ENCODE measurements at regions of chr17 and their contacts with region 1.

Region 1: DNA sequence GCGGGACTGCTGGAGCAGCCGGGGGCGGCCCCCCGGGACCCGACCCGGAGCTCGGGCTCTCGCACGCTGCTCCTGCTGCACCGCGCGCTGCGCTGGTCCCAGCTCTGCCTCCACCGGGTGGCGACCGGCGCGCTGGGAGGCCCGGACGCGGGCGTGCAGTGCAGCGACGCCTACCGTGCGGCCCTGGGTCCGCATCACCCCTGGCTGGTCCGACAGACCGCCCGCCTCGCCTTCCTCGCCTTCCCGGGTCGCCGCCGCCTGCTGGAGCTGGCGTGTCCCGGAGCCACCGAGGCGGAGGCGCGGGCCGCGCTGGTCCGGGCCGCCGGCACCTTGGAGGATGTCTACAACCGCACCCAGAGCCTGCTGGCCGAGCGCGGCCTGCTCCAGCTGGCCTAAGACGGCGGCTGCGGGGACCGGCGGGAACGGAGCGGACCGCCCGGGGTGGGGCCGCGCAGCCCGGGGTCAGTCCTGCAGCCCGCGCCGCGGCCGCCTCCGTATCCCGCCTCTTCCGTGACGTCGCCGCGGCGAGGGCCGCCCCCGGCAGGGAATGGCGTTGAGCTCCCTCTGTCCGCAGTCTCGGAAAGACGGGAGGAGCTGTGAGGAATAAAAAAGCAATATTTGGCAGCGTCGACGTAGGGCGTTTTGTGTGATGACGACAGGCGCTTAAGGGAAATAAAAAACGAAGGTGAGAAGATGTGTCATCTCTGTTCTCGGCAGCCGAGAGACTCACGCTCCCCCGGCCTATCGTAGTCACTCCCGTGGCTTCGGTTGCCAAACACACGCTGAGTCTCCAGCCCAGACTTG is 1.3 kb downstream of the GLTPD2 start:
- DNase-seq: peak; percentile 88
- ATAC-seq: peak; percentile 93
- H3K4me3 Mint-ChIP-seq: peak overlapping the region; percentile 86
- H3K27ac Mint-ChIP-seq: peak overlapping the region; percentile 90
- H3K4me1 Mint-ChIP-seq: peaks cover 30% of the 10 kb centered on the region
- H3K27me3 Mint-ChIP-seq: peaks cover 46% of the 10 kb centered on the region

Region 2: GRCh38 chr17:4709794-4710692 is 80.1 kb before region 1 on chr17 and contains the start of gene ARRB2:
- CTCF ChIA-PET with region 1: interaction called, 39 read pairs
- DNase-seq: peak; percentile 99
- ATAC-seq: peak; percentile 85
- H3K4me3 Mint-ChIP-seq: peak within 1 kb of the TSS; percentile 95
- H3K27ac Mint-ChIP-seq: peak within 1 kb of the TSS; percentile 97
- H3K4me1 Mint-ChIP-seq: peaks cover 61% of the 10 kb centered on the region
- H3K27me3 Mint-ChIP-seq: no peaks in the 10 kb centered on the region
- total RNA-seq, gene ARRB2: 348 to 365 TPM

Region 3: DNA sequence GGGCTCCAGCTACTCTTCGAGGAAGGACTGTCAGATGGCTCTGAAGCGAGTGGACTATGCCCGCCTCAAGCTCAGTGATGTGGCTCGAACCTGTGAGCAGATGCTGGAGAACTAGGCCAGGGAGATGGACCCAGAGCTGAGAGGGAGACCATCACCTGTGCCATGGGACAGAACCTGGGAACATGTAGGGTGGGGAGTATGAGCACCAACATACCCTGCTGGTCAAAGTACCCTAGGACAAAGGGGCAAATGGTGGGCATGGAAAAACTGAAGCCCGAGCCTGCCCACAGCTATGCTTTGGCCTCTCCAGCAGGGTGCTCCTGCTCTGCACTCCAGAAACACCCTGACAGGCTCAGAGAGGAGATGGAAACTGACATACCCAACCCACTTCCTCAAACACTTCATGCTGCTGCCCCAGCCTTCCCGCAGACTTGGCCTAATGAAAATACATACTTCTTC is 57.0 kb before region 1 on chr17:
- CTCF ChIA-PET with region 1: interaction called, 19 read pairs
- DNase-seq: no peak
- ATAC-seq: no peak
- H3K4me3 Mint-ChIP-seq: peak overlapping the region; percentile 91
- H3K27ac Mint-ChIP-seq: no peak overlapping the region
- H3K4me1 Mint-ChIP-seq: peaks cover 47% of the 10 kb centered on the region
- H3K27me3 Mint-ChIP-seq: peaks cover 4% of the 10 kb centered on the region

Region 4: DNA sequence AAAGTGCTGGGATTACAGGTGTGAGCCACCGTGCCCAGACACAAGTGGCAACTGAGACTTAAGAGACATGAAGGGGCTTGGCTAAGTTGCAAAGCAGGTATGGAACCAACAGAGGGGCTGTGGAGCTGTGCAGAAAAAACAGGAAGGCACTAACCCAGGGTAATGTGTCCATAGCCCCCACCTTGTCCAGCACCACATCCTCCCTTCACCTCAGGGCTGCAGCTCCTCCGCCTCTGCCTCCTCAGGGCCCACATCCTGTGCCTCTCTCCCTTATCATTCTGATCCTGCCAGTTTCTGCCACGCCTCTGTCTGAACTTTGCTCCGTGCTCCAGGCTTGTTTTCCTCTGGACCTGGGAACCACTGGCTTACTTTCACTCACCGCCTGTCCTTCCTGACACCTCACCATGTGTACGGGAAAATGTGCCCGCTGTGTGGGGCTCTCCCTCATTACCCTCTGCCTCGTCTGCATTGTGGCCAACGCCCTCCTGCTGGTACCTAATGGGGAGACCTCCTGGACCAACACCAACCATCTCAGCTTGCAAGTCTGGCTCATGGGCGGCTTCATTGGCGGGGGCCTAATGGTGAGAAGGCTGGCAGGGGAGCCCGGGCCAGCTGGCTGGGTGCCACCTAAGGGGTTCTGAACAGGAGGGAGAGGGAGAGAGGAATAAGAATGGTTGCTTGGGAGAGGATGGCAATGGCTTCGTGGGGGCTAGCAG is 18.4 kb before region 1 on chr17 and contains the start of gene TM4SF5:
- CTCF ChIA-PET with region 1: interaction called, 33 read pairs
- DNase-seq: peak; percentile 83
- ATAC-seq: peak; percentile 92
- H3K4me3 Mint-ChIP-seq: peak within 1 kb of the TSS; percentile 3
- H3K27ac Mint-ChIP-seq: peak within 1 kb of the TSS; percentile 25
- H3K4me1 Mint-ChIP-seq: peaks cover 16% of the 10 kb centered on the region
- H3K27me3 Mint-ChIP-seq: peaks cover 20% of the 10 kb centered on the region
- total RNA-seq, gene TM4SF5: not detected

Region 5: DNA sequence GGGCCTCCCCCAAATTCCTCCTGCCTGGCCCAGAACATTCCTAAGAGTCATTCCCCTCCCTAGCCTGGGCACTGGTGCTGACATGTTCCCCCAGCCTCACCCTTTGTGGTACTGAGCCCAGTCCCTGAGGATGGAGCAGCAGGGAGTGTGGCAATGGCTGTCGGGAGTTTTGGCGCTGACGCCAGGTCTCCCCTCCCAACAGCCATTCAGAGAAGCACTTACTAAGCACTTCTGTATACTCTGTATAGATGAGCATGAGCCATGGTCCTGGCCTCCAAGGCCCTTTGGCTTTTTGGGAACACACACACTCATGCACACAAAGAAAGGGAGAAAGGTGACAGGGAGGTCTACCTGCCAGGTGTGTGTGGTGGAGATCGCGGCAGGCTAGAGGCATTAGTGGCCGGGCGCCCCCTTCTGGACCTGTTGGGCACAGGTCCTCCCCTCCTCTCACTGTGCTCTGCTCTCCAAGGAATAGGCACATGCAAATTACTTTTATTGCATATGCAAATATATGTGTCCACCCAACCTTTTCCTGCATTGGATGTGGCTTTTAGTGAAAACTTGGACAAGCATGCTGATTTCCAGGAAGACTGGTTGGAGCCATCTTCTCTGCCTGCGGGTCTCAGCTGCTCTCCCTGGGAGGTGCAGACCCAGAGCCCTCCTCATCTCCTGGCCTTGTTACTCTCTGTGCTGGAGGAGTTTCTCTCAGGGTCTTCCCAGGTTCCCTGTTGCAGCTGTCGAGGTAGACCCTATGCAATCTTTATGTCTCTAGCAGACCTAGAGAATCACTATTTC is 91.9 kb after region 1 on chr17:
- CTCF ChIA-PET with region 1: interaction called, 26 read pairs
- DNase-seq: peak; percentile 65
- ATAC-seq: peak; percentile 80
- H3K4me3 Mint-ChIP-seq: no peak overlapping the region
- H3K27ac Mint-ChIP-seq: no peak overlapping the region
- H3K4me1 Mint-ChIP-seq: no peaks in the 10 kb centered on the region
- H3K27me3 Mint-ChIP-seq: no peaks in the 10 kb centered on the region

Region 6: GRCh38 chr17:4903051-4903818 is 113.1 kb after region 1 on chr17 and contains the start of gene CHRNE:
- CTCF ChIA-PET with region 1: interaction called, 21 read pairs
- DNase-seq: peak; percentile 87
- ATAC-seq: peak; percentile 32
- H3K4me3 Mint-ChIP-seq: peak within 1 kb of the TSS; percentile 10
- H3K27ac Mint-ChIP-seq: peak within 1 kb of the TSS; percentile 67
- H3K4me1 Mint-ChIP-seq: peaks cover 36% of the 10 kb centered on the region
- H3K27me3 Mint-ChIP-seq: peaks cover 4% of the 10 kb centered on the region
- total RNA-seq, gene CHRNE: 0.40 to 0.41 TPM

Measured in activated CD8-positive, alpha-beta memory T cell treated with anti-CD3 and anti-CD28 coated beads, Interleukin-2, amount 10 ng/mL, durations not matched to agents 7 days and 5 days (primary cell).